ENCODE measurements at regions of chr15 and their contacts with region 1.

Region 1: GRCh38 chr15:55637086-55637485 is 48.9 kb upstream of the PYGO1 start:
- DNase-seq: no peak
- H3K4me3 Mint-ChIP-seq: no peak overlapping the region
- H3K27ac Mint-ChIP-seq: no peak overlapping the region
- H3K4me1 Mint-ChIP-seq: no peaks in the 10 kb centered on the region
- H3K27me3 Mint-ChIP-seq: peaks cover 6% of the 10 kb centered on the region

Region 2: DNA sequence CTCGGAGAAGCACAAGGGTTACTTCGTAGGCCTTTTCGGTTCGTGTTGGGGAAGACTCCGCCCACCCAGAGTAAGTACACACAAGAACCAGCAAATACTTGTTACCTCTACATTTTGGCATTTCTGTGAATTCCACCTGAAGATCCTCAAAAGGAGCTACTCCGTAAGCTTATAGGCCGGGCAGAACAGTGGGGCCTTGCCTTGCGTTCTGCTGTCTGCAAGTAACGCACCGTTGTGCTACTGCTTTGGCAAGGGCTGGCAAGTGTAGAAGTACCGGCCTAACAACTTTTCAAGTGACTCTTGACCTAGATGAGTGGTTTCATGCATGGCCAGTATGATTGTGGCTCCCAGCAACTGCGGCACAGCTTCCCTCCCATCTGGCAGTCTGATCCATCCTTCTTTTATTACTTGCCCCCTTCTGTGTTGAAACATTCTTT is 122.7 kb before region 1 on chr15:
- intact Hi-C with region 1: loop called (anchors 1 kb)
- DNase-seq: no peak
- H3K4me3 Mint-ChIP-seq: no peak overlapping the region
- H3K27ac Mint-ChIP-seq: no peak overlapping the region
- H3K4me1 Mint-ChIP-seq: no peaks in the 10 kb centered on the region
- H3K27me3 Mint-ChIP-seq: peaks cover 5% of the 10 kb centered on the region

Region 3: DNA sequence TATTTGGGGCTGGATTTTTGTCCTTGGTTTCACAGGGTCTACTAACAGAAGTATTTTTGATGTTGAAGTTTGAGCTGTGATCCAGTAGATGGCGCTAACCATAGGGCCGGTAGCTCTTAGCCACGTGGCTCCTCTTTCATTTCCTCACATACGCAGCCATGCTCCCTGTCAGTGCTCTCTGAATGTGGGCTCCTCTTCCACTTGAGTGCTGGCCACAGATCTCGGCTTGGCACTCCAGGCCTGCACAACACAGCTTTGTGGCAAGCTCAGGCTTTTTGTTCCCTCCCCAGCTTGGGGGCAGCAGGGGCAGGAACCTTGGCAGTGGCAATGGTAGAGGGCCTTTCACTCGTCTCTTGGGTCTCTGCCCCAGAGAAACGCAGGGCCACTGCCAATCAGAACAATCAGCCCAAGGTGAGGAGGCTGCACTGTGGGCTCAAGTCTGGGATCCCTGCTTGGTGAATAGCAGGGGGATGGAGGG is 110.5 kb before region 1 on chr15:
- intact Hi-C with region 1: loop called (anchors 1 kb)
- DNase-seq: no peak
- H3K4me3 Mint-ChIP-seq: no peak overlapping the region
- H3K27ac Mint-ChIP-seq: no peak overlapping the region
- H3K4me1 Mint-ChIP-seq: no peaks in the 10 kb centered on the region
- H3K27me3 Mint-ChIP-seq: peaks cover 6% of the 10 kb centered on the region